ENCODE measurements at regions of chr17 and their contacts with region 1.

Region 1: GRCh38 chr17:18087610-18088491 is at the start of gene DRG2:
- DNase-seq: peak; percentile 76
- H3K4me3 ChIP-seq: peak within 1 kb of the TSS; percentile 98
- H3K27ac ChIP-seq: peak within 1 kb of the TSS; percentile 39
- H3K27me3 ChIP-seq: no peaks in the 10 kb centered on the region
- CTCF ChIP-seq: no peak
- polyA plus RNA-seq, gene DRG2: 31.5 and 36.0 TPM in 2 replicates

Region 2: GRCh38 chr17:19330271-19330670 is 1242.4 kb after region 1 on chr17:
- CTCF ChIA-PET with region 1: interaction called, 12 read pairs
- POLR2A ChIA-PET with region 1: no interaction called
- DNase-seq: no peak
- H3K4me3 ChIP-seq: no peak overlapping the region
- H3K27ac ChIP-seq: peak overlapping the region; percentile 83
- H3K27me3 ChIP-seq: no peaks in the 10 kb centered on the region
- CTCF ChIP-seq: no peak